ENCODE measurements at regions of chr3 and their contacts with region 1.

Region 1: GRCh38 chr3:141311496-141312353 is 56.6 kb upstream of the ZBTB38 start:
- DNase-seq: peak; percentile 93 to 99 (median 97)
- ATAC-seq: peak; percentile 88
- H3K4me3 ChIP-seq: peak overlapping the region; percentile 86
- H3K4me3 Mint-ChIP-seq: peak overlapping the region; percentile 97
- H3K27ac ChIP-seq: peak overlapping the region; percentile 62 to 75
- H3K27ac Mint-ChIP-seq: peak overlapping the region; percentile 92
- H3K4me1 ChIP-seq: peaks cover 48% of the 10 kb centered on the region
- H3K4me1 Mint-ChIP-seq: peaks cover 67% of the 10 kb centered on the region
- H3K27me3 ChIP-seq: no peaks in the 10 kb centered on the region
- H3K27me3 Mint-ChIP-seq: no peaks in the 10 kb centered on the region
- CTCF ChIP-seq: peak; percentile 65

Region 2: DNA sequence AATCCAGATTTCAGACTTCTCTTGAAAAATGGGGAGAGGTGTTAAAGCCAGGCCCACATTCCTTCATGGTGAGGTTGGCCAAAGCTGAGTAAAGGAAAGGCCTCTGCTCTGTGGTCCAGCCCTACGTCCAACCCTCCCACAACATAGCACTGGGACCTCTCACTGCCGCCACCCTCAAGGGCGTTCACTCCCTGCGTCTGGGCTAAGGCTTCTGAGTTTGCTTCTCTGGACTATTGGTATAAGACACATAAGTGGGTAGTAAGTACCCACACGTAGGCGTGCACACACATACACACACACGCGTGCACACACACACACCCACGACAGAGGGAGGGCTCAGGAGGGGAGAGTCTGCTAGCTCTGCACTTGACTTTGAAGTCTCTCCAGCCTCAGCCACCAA is 160.3 kb before region 1 on chr3:
- CTCF ChIA-PET with region 1: no interaction called
- POLR2A ChIA-PET with region 1: no interaction called
- intact Hi-C with region 1: no loop called
- DNase-seq: no peak
- ATAC-seq: no peak
- H3K4me3 ChIP-seq: no peak overlapping the region
- H3K4me3 Mint-ChIP-seq: no peak overlapping the region
- H3K27ac ChIP-seq: no peak overlapping the region
- H3K27ac Mint-ChIP-seq: no peak overlapping the region
- H3K4me1 ChIP-seq: no peaks in the 10 kb centered on the region
- H3K4me1 Mint-ChIP-seq: no peaks in the 10 kb centered on the region
- H3K27me3 ChIP-seq: peaks cover 0 to 2% of the 10 kb centered on the region in 2 experiments
- H3K27me3 Mint-ChIP-seq: peaks cover 5% of the 10 kb centered on the region
- CTCF ChIP-seq: no peak

Region 3: GRCh38 chr3:141360888-141361598 is 49.3 kb after region 1 on chr3:
- CTCF ChIA-PET with region 1: interaction called, 13 read pairs
- POLR2A ChIA-PET with region 1: interaction called, 16 read pairs
- intact Hi-C with region 1: loop called in 1 of 2 experiments (anchors 5 kb)
- DNase-seq: peak in 4 of 14 experiments; percentile 21 to 71 (median 68)
- ATAC-seq: peak; percentile 79
- H3K4me3 ChIP-seq: no peak overlapping the region
- H3K4me3 Mint-ChIP-seq: no peak overlapping the region
- H3K27ac ChIP-seq: no peak overlapping the region
- H3K27ac Mint-ChIP-seq: no peak overlapping the region
- H3K4me1 ChIP-seq: peaks cover 9% of the 10 kb centered on the region
- H3K4me1 Mint-ChIP-seq: peaks cover 9% of the 10 kb centered on the region
- H3K27me3 ChIP-seq: no peaks in the 10 kb centered on the region
- H3K27me3 Mint-ChIP-seq: no peaks in the 10 kb centered on the region
- CTCF ChIP-seq: peak; percentile 76

Region 4: GRCh38 chr3:141402476-141403171 is 90.9 kb after region 1 on chr3:
- CTCF ChIA-PET with region 1: interaction called, 4 read pairs
- POLR2A ChIA-PET with region 1: interaction called, 25 read pairs
- intact Hi-C with region 1: no loop called
- DNase-seq: peak; percentile 33 to 67 (median 48)
- ATAC-seq: peak; percentile 69
- H3K4me3 ChIP-seq: peak overlapping the region; percentile 64
- H3K4me3 Mint-ChIP-seq: peak overlapping the region; percentile 98
- H3K27ac ChIP-seq: peak overlapping the region; percentile 42 to 46
- H3K27ac Mint-ChIP-seq: peak overlapping the region; percentile 98
- H3K4me1 ChIP-seq: peaks cover 28% of the 10 kb centered on the region
- H3K4me1 Mint-ChIP-seq: peaks cover 63% of the 10 kb centered on the region
- H3K27me3 ChIP-seq: no peaks in the 10 kb centered on the region
- H3K27me3 Mint-ChIP-seq: no peaks in the 10 kb centered on the region
- CTCF ChIP-seq: no peak

Region 5: GRCh38 chr3:141441381-141442364 is 129.9 kb after region 1 on chr3:
- CTCF ChIA-PET with region 1: interaction called, 20 read pairs
- POLR2A ChIA-PET with region 1: interaction called, 5 read pairs
- intact Hi-C with region 1: no loop called
- DNase-seq: peak; percentile 42 to 86 (median 74)
- ATAC-seq: peak; percentile 97
- H3K4me3 ChIP-seq: no peak overlapping the region
- H3K4me3 Mint-ChIP-seq: peak overlapping the region; percentile 4
- H3K27ac ChIP-seq: no peak overlapping the region
- H3K27ac Mint-ChIP-seq: peak overlapping the region; percentile 68
- H3K4me1 ChIP-seq: peaks cover 9% of the 10 kb centered on the region
- H3K4me1 Mint-ChIP-seq: peaks cover 28% of the 10 kb centered on the region
- H3K27me3 ChIP-seq: no peaks in the 10 kb centered on the region
- H3K27me3 Mint-ChIP-seq: no peaks in the 10 kb centered on the region
- CTCF ChIP-seq: peak; percentile 75